Dorsolateral prefrontal cortex (tissue), 120 donors: ENCODE measurements at regions of chrX and their contacts with region 1.

Region 1: GRCh38 chrX:150410513-150410912 is 47.4 kb downstream of the MAMLD1 start:
- DNase-seq: no peak
- H3K4me3 ChIP-seq: no peak overlapping the region
- H3K27ac ChIP-seq: no peak overlapping the region
- H3K27me3 ChIP-seq: peaks cover 0 to 61% (median 9%) of the 10 kb centered on the region in 45 donors
- CTCF ChIP-seq: no peak

Region 2: GRCh38 chrX:150337536-150337935 is 73.0 kb before region 1 on chrX:
- intact Hi-C with region 1: no loop called
- DNase-seq: no peak
- H3K4me3 ChIP-seq: no peak overlapping the region
- H3K27ac ChIP-seq: no peak overlapping the region
- H3K27me3 ChIP-seq: peaks cover 0 to 36% (median 4%) of the 10 kb centered on the region in 45 donors
- CTCF ChIP-seq: no peak

Region 3: GRCh38 chrX:150372280-150372679 is 38.2 kb before region 1 on chrX:
- intact Hi-C with region 1: loop called in 1 of 2 experiments (anchors 5 kb)
- DNase-seq: peak in 2 of 10 donors; percentile 52 to 53
- H3K4me3 ChIP-seq: peak overlapping the region in 16 of 59 donors; percentile 5 to 42 (median 16)
- H3K27ac ChIP-seq: peak overlapping the region in 38 of 59 donors; percentile 10 to 84 (median 61)
- H3K27me3 ChIP-seq: peaks cover 0 to 49% (median 3%) of the 10 kb centered on the region in 45 donors
- CTCF ChIP-seq: no peak

Region 4: GRCh38 chrX:150499240-150499639 is 88.7 kb after region 1 on chrX:
- intact Hi-C with region 1: no loop called
- DNase-seq: no peak
- H3K4me3 ChIP-seq: no peak overlapping the region
- H3K27ac ChIP-seq: no peak overlapping the region
- H3K27me3 ChIP-seq: peaks cover 0 to 67% (median 12%) of the 10 kb centered on the region in 45 donors
- CTCF ChIP-seq: no peak